Activated CD8-positive, alpha-beta T cell treated with anti-CD3 and anti-CD28 coated beads for 36 hours (primary cell): ENCODE measurements at regions of chr12 and their contacts with region 1.

Region 1: GRCh38 chr12:68137335-68137830 is 22.2 kb downstream of the IFNG start:
- DNase-seq: peak; percentile 52
- ATAC-seq: peak; percentile 75
- H3K4me3 Mint-ChIP-seq: peak overlapping the region; percentile 44
- H3K27ac Mint-ChIP-seq: peak overlapping the region; percentile 89
- H3K4me1 Mint-ChIP-seq: peaks cover 57% of the 10 kb centered on the region
- H3K27me3 Mint-ChIP-seq: no peaks in the 10 kb centered on the region
- CTCF ChIP-seq: no peak

Region 2: DNA sequence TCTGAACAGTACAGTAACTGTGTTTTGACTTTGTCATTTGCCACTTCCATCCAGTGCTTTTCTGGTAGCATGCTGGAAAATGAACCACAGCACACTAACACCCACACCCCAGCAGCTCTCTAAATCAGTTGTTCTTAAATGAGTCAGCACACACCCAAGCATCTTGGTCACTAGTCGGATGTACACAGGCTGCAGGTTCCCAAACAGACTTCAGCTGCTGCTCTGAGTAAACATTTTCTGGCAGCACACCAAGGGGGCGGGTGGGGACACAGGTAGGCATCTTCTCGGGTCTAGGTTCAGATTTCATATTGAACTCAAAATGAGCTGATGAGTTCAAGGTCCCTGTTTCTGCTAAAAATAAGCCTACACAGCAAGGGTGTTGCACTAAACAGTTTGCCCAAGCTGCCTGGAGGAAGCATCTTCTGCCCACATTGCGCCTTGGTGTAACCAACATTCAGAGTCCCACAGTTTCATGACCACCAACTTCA is 17.6 kb before region 1 on chr12:
- CTCF ChIA-PET with region 1: interaction called, 8 read pairs
- POLR2A ChIA-PET with region 1: interaction called, 9 read pairs
- intact Hi-C with region 1: loop called (anchors 1 kb)
- DNase-seq: peak; percentile 86
- ATAC-seq: peak; percentile 72
- H3K4me3 Mint-ChIP-seq: peak overlapping the region; percentile 11
- H3K27ac Mint-ChIP-seq: no peak overlapping the region
- H3K4me1 Mint-ChIP-seq: peaks cover 26% of the 10 kb centered on the region
- H3K27me3 Mint-ChIP-seq: peaks cover 2% of the 10 kb centered on the region
- CTCF ChIP-seq: no peak